Activated T-helper 2 cell treated with anti-CD3 and anti-CD28 coated beads, Interferon-gamma antibody, Interleukin-2, Interleukin-4, amounts not matched to agents 10 μg/mL and 5 μg/mL and 100 μg/mL, durations not matched to agents 14 hours and 24 hours and 36 hours (primary cell): ENCODE measurements at regions of chr12 and their contacts with region 1.

Region 1: DNA sequence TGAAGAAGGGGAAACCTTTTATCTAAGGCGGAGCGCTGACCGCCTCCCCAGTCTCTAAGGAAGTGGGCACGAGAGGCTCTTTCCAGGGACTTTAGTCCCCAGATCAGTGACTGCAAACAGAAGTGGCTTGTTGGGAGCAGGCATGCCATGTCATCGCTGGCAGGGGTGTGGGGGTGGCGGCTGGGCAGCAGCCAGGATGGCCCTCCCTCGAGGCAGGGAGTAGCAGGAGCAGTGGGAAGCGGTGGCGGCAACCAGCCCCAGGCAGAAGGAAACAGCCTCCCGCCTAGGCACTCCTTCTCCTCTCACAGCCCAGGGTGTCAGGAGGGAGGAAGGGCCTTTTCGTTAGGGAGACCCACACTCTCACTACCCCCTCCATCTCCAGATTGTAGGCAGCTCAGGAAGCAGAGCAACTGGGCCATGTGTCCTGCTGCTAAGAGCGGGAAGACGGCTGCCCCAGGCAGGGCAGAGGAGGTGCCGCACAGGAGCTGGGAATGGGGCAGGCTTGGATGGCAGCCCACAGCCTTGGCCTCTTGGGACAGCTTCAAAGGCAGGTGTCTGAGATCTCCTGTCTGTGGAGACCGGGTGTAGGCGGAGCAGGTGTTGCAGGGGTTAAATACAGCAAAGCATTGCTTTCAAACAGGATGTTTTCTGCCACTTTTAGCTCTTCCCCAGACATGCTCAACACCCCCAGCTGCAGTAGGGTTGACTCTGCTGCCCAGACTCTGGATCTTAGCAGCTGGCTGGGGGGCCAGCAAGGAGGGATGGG is 21.8 kb downstream of the VDR start:
- DNase-seq: no peak
- H3K4me3 Mint-ChIP-seq: peak overlapping the region; percentile 87
- H3K27ac Mint-ChIP-seq: peak overlapping the region; percentile 99
- H3K4me1 Mint-ChIP-seq: peaks cover 80% of the 10 kb centered on the region
- H3K27me3 Mint-ChIP-seq: no peaks in the 10 kb centered on the region

Region 2: GRCh38 chr12:47276621-47277309 is 606.2 kb before region 1 on chr12:
- intact Hi-C with region 1: loop called (anchors 10 kb)
- DNase-seq: peak; percentile 65
- H3K4me3 Mint-ChIP-seq: peak overlapping the region; percentile 48
- H3K27ac Mint-ChIP-seq: peak overlapping the region; percentile 81
- H3K4me1 Mint-ChIP-seq: peaks cover 74% of the 10 kb centered on the region
- H3K27me3 Mint-ChIP-seq: no peaks in the 10 kb centered on the region

Region 3: DNA sequence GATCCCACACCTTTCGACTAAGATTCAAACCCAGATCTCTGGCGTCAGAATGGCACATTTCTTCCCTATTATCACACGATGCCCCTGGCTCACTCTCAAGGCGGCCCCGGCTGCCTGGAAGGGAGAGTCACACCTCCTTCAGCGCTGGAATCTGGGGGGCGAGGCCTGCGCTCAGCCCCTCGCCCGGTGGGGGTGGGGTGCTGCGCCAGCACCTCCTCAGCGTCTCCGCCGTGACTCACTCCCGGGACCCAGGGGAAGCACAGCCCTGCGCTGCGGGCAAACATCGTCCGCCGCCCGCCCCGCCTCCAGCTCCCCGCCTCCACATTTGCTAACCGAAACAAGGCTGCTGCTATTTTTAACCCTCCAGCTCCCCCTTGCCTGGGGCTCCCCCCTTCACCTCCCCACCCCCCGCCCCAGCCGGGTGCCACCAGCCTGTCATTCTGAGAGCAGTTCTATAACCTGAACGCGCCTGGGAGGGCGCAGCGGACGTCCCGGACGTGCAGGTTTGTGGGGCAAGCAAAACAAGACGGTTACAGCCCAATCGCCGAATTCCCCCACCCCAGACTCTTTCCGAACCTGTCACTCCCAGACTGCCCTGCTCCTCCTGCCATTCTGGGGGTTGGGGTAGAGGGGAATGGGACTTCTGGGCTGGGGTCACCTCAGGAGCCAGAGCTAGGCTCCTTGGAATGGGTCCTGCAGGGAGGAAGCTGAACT is 70.0 kb before region 1 on chr12:
- intact Hi-C with region 1: loop called (anchors 1 kb)
- DNase-seq: peak; percentile 86
- H3K4me3 Mint-ChIP-seq: peak overlapping the region; percentile 95
- H3K27ac Mint-ChIP-seq: peak overlapping the region; percentile 100
- H3K4me1 Mint-ChIP-seq: peaks cover 75% of the 10 kb centered on the region
- H3K27me3 Mint-ChIP-seq: no peaks in the 10 kb centered on the region

Region 4: DNA sequence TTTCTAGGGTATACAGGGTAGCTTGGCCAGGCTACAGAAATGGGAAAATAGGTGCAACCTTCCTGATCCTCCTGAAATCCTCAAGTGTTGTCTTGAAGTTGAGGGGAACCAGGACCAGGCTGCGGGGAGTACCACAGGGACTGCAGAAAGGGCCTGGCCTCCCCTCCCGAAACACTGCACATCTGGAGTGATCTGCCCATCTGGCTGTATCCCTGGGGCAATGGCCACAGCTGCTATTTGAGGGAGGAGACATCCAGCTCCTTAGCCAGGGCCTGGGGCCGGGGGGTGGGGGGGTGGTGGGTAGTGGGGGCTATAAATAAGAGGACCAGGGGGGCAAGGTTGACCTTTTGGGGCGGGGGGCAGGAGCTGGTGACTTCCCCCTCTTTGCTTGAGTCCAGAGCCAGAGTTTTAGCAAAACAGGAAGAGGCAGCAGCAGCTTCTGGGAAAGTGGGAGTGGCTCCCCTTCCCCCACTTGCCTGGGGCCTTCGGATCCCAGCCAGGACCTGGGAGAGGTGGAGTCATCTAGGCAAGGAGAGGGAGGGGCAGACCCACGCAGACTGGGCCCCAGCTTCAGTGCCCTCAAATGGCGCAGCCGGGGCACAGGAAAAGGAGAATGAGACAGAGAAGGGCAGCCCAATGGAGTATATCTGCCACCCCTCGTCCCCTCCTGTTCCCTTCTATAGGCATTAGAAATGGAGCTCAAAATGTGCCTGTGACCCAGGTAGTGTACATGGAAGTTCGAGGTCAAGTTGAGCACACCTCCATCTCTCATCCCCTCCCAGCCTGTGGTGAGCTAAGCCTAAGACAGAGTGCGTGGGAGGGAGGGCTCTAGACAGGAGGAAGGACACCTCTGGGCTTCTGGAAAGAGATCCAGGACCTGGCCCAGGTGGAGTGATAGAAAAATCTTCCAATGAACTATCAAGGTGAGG is 54.1 kb before region 1 on chr12:
- intact Hi-C with region 1: no loop called
- DNase-seq: no peak
- H3K4me3 Mint-ChIP-seq: peak overlapping the region; percentile 20
- H3K27ac Mint-ChIP-seq: peak overlapping the region; percentile 61
- H3K4me1 Mint-ChIP-seq: peaks cover 70% of the 10 kb centered on the region
- H3K27me3 Mint-ChIP-seq: no peaks in the 10 kb centered on the region

Region 5: GRCh38 chr12:47868552-47869031 is 14.4 kb before region 1 on chr12:
- intact Hi-C with region 1: loop called (anchors 1 kb)
- DNase-seq: no peak
- H3K4me3 Mint-ChIP-seq: peak overlapping the region; percentile 37
- H3K27ac Mint-ChIP-seq: peak overlapping the region; percentile 96
- H3K4me1 Mint-ChIP-seq: peaks cover 78% of the 10 kb centered on the region
- H3K27me3 Mint-ChIP-seq: no peaks in the 10 kb centered on the region

Region 6: DNA sequence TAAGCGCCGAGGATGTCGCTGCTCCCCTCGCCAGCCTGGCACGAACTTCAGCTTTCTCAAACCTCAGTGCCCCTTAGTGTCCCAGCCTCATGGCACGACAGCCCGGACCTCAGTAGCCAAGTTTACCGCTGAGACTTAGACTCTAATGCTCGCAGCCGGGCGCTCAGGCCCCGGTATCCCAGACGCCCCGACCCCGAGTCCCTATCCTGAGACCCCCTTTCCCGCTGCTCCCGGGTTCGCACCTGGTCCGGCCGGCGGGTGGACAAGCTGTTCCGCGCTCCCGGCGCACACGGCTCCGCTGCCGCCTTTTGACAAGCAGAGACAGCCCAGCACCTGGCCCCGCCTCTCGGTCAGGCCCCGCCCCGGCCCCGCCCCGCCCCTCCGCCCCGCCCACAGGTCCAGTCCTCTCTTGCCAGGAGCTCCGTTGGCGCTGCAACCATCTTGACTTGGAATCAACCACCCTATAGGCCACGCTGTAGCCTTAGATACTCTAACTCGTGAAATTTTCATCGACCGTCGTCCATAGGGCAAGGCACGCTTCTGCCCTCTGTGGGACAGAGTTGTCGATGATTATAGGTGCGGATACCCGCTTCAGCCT is 21.8 kb after region 1 on chr12 and contains the start of gene VDR:
- intact Hi-C with region 1: loop called (anchors 1 kb)
- DNase-seq: peak; percentile 65
- H3K4me3 Mint-ChIP-seq: peak within 1 kb of the TSS; percentile 100
- H3K27ac Mint-ChIP-seq: peak within 1 kb of the TSS; percentile 98
- H3K4me1 Mint-ChIP-seq: peaks cover 45% of the 10 kb centered on the region
- H3K27me3 Mint-ChIP-seq: peaks cover 31% of the 10 kb centered on the region
- total RNA-seq, gene VDR: 312 and 317 TPM in 2 replicates

Region 7: GRCh38 chr12:48157018-48157888 is 274.3 kb after region 1 on chr12 and contains the start of gene ASB8:
- intact Hi-C with region 1: loop called (anchors 5 kb)
- DNase-seq: peak; percentile 99
- H3K4me3 Mint-ChIP-seq: peak within 1 kb of the TSS; percentile 86
- H3K27ac Mint-ChIP-seq: peak within 1 kb of the TSS; percentile 88
- H3K4me1 Mint-ChIP-seq: peaks cover 18% of the 10 kb centered on the region
- H3K27me3 Mint-ChIP-seq: peaks cover 2% of the 10 kb centered on the region
- total RNA-seq, gene ASB8: 32.5 and 33.1 TPM in 2 replicates